Activated T-helper 1 cell treated with anti-CD3 and anti-CD28 coated beads, Interleukin-12 subunit alpha, Interleukin-12 subunit beta, Interleukin-2, Interleukin-4 antibody, amounts not matched to agents 30 ng/mL and 10 ng/mL and 1 ng/mL, durations not matched to agents 14 hours and 24 hours and 36 hours (primary cell): ENCODE measurements at regions of chr7 and their contacts with region 1.

Region 1: DNA sequence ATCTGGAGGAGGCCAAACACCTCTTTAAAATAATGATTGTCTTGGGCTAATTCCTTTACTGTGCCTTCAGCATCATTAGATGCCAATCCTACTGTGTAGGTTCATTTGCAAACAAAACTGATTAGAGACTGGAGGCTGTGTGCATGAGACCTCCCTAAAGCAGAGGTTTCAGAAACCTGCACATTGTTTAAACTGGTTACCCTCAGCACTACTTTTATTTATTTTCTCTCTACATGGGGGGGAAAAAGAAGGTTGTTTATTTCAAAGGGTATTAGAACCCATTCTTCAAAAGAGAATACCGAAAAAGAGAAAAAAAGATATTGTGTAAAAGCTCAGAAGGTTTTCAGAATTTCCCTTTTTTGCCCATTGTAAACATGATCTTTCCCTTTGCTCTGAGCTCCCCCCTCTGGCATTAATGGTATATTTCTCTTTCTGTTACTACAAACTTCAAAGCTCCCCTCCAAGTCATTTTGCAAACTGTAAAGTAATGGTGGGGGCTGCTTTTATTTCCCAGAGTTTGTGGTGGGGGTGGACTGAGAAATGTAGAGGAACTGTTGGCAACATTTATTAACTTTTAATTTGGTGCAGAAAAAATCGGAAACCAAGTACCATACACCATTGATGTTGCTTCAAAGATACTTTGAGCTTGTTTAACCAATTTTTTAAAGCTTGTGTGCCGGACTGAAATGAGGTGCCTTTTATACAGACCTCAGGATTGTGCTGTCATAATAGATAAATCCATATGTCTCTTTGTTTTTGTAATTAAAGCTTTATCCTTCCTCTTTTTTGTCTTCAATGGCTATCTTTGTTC is 181.4 kb downstream of the EXOC4 start:
- DNase-seq: no peak
- H3K4me3 Mint-ChIP-seq: no peak overlapping the region
- H3K27ac Mint-ChIP-seq: no peak overlapping the region
- H3K4me1 Mint-ChIP-seq: no peaks in the 10 kb centered on the region
- H3K27me3 Mint-ChIP-seq: no peaks in the 10 kb centered on the region

Region 2: DNA sequence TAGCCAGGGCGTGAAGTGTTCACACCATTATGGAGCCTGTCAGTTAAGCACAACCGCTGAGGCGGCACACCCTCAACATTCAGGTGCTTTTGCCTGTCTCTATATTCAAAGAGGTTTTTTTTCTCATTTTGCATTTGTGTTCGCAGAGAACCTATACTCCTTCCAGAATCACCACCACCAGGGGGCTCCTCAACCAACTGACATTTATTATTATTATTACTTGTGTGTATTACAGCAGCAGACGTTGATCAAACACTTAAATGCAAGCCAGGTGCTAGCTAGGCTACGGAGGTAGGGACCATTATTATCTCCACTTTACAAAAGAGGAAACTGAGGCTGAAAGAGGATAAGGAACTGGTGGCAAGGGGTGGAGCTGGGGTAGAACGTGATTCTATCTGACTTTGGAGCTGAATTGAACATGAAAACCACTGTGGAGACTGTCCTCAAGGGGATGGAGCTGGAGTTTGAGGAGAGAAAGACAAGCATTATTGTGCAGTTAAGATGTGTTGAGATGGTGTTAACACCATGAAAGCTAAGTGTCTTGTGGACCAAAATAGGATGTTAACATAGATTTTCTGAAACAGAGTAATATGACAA is 724.2 kb before region 1 on chr7:
- intact Hi-C with region 1: loop called (anchors 10 kb)
- DNase-seq: no peak
- H3K4me3 Mint-ChIP-seq: no peak overlapping the region
- H3K27ac Mint-ChIP-seq: no peak overlapping the region
- H3K4me1 Mint-ChIP-seq: no peaks in the 10 kb centered on the region
- H3K27me3 Mint-ChIP-seq: no peaks in the 10 kb centered on the region

Region 3: DNA sequence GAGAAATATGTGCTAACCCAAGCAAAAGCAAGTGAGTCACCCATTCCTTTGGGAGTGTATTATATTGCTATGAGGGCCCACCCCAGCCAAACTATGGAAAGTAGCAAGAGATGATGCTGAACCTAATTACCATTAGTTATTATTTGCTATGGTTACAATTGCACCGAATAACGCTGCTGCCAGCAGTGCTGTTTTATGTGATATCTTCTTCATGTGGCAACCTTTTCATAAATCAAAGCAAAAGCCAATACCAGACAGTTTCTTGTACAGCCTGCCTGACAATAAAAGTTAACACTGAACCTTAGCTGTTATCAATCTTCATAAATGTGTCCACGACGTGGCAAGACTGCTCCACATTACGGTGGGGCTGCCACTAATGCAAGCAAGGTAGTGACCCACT is 616.3 kb before region 1 on chr7:
- intact Hi-C with region 1: no loop called
- DNase-seq: no peak
- H3K4me3 Mint-ChIP-seq: no peak overlapping the region
- H3K27ac Mint-ChIP-seq: no peak overlapping the region
- H3K4me1 Mint-ChIP-seq: no peaks in the 10 kb centered on the region
- H3K27me3 Mint-ChIP-seq: no peaks in the 10 kb centered on the region

Region 4: DNA sequence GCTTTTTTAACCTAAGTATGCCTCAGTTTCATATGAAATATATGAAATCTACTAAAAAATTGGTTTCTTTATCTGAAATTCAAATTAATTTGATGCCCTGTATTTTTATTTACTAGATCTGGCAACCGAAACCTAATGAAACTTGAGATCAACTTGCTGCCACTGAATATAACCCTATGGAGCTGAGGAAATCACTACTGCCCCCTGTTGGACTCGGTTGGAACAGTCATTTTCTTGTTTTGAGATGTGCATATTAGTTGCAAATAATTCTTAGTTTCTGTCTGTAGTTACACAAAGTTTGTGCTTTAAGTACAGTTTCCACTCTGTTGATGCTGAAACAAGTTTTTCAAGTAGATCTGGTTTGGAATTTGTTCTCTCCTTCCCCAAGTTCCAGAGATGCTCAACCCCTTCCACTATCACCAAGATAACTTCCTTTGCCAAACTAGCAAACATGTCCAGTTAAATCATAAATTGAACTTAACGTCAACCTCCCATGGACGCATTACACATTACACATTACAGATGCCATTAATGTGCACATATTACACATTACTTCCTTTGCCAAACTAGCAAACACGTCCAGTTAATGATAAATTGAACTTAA is 203.6 kb before region 1 on chr7:
- intact Hi-C with region 1: loop called (anchors 10 kb)
- DNase-seq: peak; percentile 10
- H3K4me3 Mint-ChIP-seq: no peak overlapping the region
- H3K27ac Mint-ChIP-seq: no peak overlapping the region
- H3K4me1 Mint-ChIP-seq: no peaks in the 10 kb centered on the region
- H3K27me3 Mint-ChIP-seq: peaks cover 8% of the 10 kb centered on the region

Region 5: DNA sequence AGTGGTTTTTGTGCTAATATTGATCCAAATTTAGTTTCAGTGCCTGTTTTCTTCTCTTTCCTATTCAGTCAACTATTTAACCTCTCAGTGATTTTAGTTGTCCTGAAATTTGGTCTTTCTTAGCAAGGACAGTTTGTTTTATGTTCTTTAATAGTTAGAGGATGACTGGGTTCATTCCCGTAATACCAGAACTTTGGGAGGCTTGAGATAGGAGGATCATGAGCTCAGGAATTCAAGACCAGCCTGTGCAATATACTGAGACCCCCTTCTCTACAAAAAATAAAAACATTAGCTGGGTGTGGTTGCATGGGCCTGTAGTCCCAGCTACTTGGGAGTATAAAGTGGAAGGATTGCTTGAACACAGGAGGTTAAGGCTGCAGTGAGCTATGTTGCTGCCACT is 33.0 kb before region 1 on chr7:
- intact Hi-C with region 1: no loop called
- DNase-seq: no peak
- H3K4me3 Mint-ChIP-seq: no peak overlapping the region
- H3K27ac Mint-ChIP-seq: no peak overlapping the region
- H3K4me1 Mint-ChIP-seq: peaks cover 5% of the 10 kb centered on the region
- H3K27me3 Mint-ChIP-seq: no peaks in the 10 kb centered on the region